Lower leg skin (tissue), 4 donors: ENCODE measurements at regions of chrX and their contacts with region 1.

Region 1: DNA sequence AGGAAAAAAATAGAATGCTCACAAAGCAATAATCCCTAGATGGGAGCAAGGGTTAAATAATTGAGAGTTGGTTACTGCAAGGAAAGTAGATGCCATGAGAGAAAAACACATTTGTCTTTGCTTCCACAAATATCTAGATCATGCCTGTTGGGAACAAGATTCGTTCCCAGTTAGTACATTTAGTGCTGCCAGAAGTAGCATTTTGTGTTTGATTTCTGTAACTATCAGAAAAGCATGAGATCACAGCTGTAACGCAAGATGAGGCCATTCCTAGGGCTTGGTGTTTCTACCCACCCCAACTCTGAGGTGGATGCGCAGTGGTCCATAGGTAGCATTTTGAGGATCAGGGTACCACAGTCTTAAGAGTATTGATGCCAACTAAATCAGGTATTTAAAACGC is 20.4 kb upstream of the PDK3 start:
- DNase-seq: no peak
- H3K4me3 ChIP-seq: no peak overlapping the region
- CTCF ChIP-seq: no peak
- POLR2A ChIP-seq: no peak

Region 2: DNA sequence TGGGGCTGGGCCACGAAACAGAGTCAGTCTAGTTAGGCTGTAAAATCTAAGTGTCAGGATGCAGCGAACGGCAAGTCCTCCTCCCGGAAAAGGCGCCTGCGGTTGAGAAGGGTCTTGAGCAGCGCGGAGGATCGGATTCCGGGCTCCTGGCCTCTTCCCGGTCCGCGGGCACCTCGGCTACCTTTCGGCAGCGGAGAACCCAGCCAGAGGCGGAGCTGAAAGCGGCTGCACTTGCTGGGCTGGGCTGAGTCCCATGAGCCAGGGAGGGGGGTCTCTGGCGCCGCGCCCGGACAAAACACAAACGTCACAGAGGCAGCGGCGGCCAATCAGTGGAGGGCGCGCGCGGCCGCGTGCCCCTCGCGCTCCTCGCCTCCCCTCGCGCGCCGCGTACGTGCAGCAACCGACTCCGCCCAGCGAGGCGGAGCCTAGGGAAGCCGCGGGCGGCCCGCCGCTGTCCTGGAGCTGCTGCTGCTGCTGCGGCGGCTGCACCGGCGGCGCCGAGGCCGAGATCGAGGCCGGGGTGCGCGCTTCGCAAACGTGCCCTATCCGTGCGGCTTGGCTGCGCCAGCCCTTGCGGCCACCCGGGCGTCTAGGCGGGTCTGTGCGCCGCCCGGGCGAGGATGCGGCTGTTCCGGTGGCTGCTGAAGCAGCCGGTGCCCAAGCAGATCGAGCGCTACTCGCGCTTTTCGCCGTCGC is 20.3 kb after region 1 on chrX and contains the start of gene PDK3:
- intact Hi-C with region 1: loop called (anchors 1 kb)
- DNase-seq: peak; percentile 74 to 96
- H3K4me3 ChIP-seq: peak within 1 kb of the TSS; percentile 32
- CTCF ChIP-seq: no peak
- POLR2A ChIP-seq: no peak
- total RNA-seq, gene PDK3: 16.7 to 62.4 (median 40.1) TPM